Activated CD4-positive, alpha-beta T cell treated with anti-CD3 and anti-CD28 coated beads, Interleukin-2, amount 10 ng/mL, durations not matched to agents 24 days and 14 days (primary cell): ENCODE measurements at regions of chr16 and their contacts with region 1.

Region 1: GRCh38 chr16:17364319-17365210 is 106.2 kb downstream of the XYLT1 start:
- DNase-seq: peak; percentile 91
- H3K4me3 Mint-ChIP-seq: peak overlapping the region; percentile 64
- H3K27ac Mint-ChIP-seq: peak overlapping the region; percentile 77
- H3K4me1 Mint-ChIP-seq: peaks cover 85% of the 10 kb centered on the region
- H3K27me3 Mint-ChIP-seq: no peaks in the 10 kb centered on the region

Region 2: DNA sequence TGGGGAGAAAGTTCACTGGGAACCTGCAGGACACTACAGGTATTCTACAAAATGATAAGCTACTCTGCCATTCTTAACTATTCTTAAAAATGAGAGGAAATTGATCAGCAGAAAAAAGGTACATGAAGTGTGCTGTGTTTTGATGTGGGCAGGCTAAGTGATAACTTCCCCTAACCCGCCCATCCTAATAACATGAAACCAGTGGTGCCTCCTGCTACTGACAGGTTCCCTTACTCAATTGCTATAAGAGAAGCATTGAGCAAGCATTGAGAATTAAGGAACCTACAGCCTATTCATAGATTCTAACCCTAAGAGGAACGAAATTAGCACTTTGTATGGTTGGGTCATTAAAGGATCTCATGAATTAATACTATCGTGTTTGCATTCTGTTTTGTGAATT is 87.3 kb after region 1 on chr16:
- intact Hi-C with region 1: loop called (anchors 5 kb)
- DNase-seq: no peak
- H3K4me3 Mint-ChIP-seq: no peak overlapping the region
- H3K27ac Mint-ChIP-seq: no peak overlapping the region
- H3K4me1 Mint-ChIP-seq: peaks cover 44% of the 10 kb centered on the region
- H3K27me3 Mint-ChIP-seq: no peaks in the 10 kb centered on the region